WTC11 (cell line): ENCODE measurements at regions of chr1 and their contacts with region 1.

Region 1: GRCh38 chr1:156129706-156130581 is 15.4 kb downstream of the LMNA start:
- DNase-seq: peak; percentile 94
- ATAC-seq: peak; percentile 92
- H3K4me3 Mint-ChIP-seq: no peak overlapping the region
- H3K27ac Mint-ChIP-seq: peak overlapping the region; percentile 96
- H3K4me1 Mint-ChIP-seq: peaks cover 29% of the 10 kb centered on the region
- H3K27me3 Mint-ChIP-seq: no peaks in the 10 kb centered on the region; the same call in 1 of the 2 replicates
- CTCF ChIP-seq: peak; percentile 93

Region 2: DNA sequence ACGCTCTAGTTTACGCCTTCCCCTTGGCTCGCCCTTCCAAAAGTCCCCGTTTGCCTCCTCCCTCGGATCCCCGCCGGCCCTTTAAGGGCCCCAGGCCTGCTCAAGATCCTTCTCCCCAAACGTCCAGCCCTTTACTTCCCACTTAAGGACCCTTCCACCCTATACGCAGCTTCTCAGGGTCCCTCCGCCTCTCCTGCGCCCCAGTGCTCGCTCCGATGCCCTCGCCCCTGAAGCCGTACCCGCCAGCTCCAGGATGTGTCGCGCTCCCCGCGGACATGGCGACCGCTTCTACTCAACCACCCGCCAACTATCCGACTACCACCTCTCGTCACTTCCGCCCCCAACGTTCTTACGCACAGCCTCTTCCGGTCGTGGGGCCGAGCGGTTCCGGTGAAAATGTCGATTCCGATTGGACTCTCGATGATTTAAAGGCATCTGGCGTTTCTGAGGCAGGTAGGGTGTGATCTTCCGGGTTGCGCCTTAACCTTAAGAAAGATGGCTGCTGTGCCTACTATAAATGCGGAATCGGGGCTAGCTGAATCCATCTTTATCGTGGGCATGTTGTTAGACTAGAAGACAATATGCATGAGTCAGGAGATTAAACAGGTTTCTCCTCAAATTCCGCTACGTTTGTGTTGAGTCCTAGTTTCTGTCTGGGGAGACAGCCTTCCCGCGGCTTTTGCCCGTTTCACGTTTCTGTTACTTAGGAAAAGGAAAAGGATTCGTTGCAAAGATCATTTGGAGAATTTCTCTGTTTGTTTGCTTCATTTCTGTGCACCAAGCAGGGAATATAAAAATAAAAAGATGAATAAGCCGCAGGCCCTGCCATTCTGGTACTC is 195.6 kb before region 1 on chr1 and contains the start of gene KHDC4:
- CTCF ChIA-PET with region 1: interaction called, 12 read pairs
- POLR2A ChIA-PET with region 1: no interaction called
- DNase-seq: peak; percentile 88
- ATAC-seq: peak; percentile 92
- H3K4me3 Mint-ChIP-seq: no peak within 1 kb of the TSS
- H3K27ac Mint-ChIP-seq: no peak within 1 kb of the TSS
- H3K4me1 Mint-ChIP-seq: peaks cover 20% of the 10 kb centered on the region
- H3K27me3 Mint-ChIP-seq: no peaks in the 10 kb centered on the region
- CTCF ChIP-seq: no peak
- total RNA-seq, gene KHDC4: 46.0 to 64.4 TPM (median 59.8 TPM) in 3 replicates

Region 3: DNA sequence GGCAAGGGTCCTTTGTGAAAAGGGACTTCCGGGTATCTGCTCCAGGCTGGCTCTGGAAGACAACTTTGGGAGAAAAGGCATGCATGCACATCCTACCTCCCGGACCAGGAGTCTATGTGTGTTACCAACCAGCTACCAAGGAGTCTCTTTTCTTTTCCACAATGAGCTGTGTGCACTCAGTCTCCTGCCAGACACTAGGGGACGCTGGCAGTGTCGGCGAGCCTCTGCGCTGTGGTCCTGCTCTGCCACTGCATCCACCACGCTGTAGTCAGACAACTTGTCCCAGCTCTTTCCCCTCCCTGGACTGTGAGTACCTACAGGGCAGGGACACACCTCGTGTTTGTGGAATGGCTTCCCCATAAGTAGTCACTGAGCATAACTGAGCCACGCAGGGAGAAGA is 104.1 kb before region 1 on chr1:
- CTCF ChIA-PET with region 1: interaction called, 11 read pairs
- POLR2A ChIA-PET with region 1: no interaction called
- DNase-seq: peak; percentile 72
- ATAC-seq: peak; percentile 99
- H3K4me3 Mint-ChIP-seq: no peak overlapping the region
- H3K27ac Mint-ChIP-seq: no peak overlapping the region
- H3K4me1 Mint-ChIP-seq: peaks cover 5% of the 10 kb centered on the region
- H3K27me3 Mint-ChIP-seq: peaks cover 28% of the 10 kb centered on the region
- CTCF ChIP-seq: no peak

Region 4: DNA sequence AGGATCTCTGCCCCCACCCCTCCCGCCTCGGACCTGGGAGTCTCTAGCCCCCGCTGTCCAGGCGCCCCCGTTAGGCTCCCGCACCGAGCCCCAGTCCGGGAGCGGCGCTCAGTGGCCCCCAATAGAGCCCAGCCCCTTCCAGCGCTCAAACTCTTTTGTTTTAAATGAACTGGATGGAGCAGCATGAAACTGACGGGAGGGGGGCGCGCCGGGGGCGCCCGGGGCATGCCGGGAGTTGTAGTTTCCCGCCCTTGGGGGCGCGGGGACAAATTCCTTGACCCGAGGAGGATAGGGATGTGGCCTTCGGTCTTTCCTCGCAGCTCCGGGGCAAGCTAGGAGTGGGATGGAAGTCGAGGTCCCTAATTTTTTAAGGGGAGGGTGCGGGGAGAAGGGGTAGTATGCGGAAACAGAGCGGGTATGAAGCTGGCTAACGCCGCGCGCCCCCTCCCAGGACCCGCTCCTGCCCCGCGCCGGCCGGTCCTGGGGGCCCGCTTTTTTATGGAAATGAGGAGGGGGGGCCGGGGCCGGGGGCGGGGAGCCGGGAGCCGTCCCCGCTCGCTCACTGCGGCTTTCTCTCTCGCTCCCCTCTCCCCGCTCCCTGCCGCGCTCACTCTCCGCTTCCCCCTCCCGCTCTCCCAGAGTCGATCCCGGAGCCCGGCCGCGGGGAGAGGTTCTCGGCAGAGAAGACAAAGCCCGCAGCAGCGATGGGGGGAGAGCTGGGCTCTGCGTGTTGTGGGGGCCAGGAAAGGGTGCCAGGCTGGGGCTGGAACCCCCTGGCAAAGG is 47.4 kb before region 1 on chr1 and contains the start of gene MEX3A:
- CTCF ChIA-PET with region 1: interaction called, 1,176 read pairs
- POLR2A ChIA-PET with region 1: interaction called, 24 read pairs
- DNase-seq: peak; percentile 99
- ATAC-seq: peak; percentile 73
- H3K4me3 Mint-ChIP-seq: peak within 1 kb of the TSS; percentile 97
- H3K27ac Mint-ChIP-seq: peak within 1 kb of the TSS; percentile 93
- H3K4me1 Mint-ChIP-seq: peaks cover 65% of the 10 kb centered on the region
- H3K27me3 Mint-ChIP-seq: no peaks in the 10 kb centered on the region
- CTCF ChIP-seq: no peak
- total RNA-seq, gene MEX3A: 66.3 to 79.1 TPM (median 70.6 TPM) in 3 replicates

Region 5: GRCh38 chr1:156096640-156097391 is 33.1 kb before region 1 on chr1:
- CTCF ChIA-PET with region 1: interaction called, 1,176 read pairs
- POLR2A ChIA-PET with region 1: interaction called, 13 read pairs
- DNase-seq: peak; percentile 92
- ATAC-seq: peak; percentile 94
- H3K4me3 Mint-ChIP-seq: no peak overlapping the region
- H3K27ac Mint-ChIP-seq: no peak overlapping the region
- H3K4me1 Mint-ChIP-seq: peaks cover 20% of the 10 kb centered on the region
- H3K27me3 Mint-ChIP-seq: no peaks in the 10 kb centered on the region
- CTCF ChIP-seq: peak; percentile 90

Region 6: GRCh38 chr1:156114101-156114916 is 15.6 kb before region 1 on chr1 and contains the start of gene LMNA:
- CTCF ChIA-PET with region 1: interaction called, 1,176 read pairs
- POLR2A ChIA-PET with region 1: interaction called, 7 read pairs
- DNase-seq: peak; percentile 80
- ATAC-seq: peak; percentile 91
- H3K4me3 Mint-ChIP-seq: peak within 1 kb of the TSS; percentile 93
- H3K27ac Mint-ChIP-seq: no peak within 1 kb of the TSS
- H3K4me1 Mint-ChIP-seq: peaks cover 34% of the 10 kb centered on the region
- H3K27me3 Mint-ChIP-seq: peaks cover 18% of the 10 kb centered on the region
- CTCF ChIP-seq: no peak
- total RNA-seq, gene LMNA: 40.7 to 68.8 TPM (median 46.2 TPM) in 3 replicates

Region 7: GRCh38 chr1:156421062-156421938 is 291.4 kb after region 1 on chr1:
- CTCF ChIA-PET with region 1: no interaction called
- POLR2A ChIA-PET with region 1: no interaction called
- DNase-seq: peak; percentile 93
- ATAC-seq: peak; percentile 88
- H3K4me3 Mint-ChIP-seq: peak overlapping the region; percentile 76
- H3K27ac Mint-ChIP-seq: no peak overlapping the region
- H3K4me1 Mint-ChIP-seq: peaks cover 34% of the 10 kb centered on the region
- H3K27me3 Mint-ChIP-seq: peaks cover 100% of the 10 kb centered on the region
- CTCF ChIP-seq: no peak